ENCODE measurements at regions of chr1 and their contacts with region 1.

Region 1: DNA sequence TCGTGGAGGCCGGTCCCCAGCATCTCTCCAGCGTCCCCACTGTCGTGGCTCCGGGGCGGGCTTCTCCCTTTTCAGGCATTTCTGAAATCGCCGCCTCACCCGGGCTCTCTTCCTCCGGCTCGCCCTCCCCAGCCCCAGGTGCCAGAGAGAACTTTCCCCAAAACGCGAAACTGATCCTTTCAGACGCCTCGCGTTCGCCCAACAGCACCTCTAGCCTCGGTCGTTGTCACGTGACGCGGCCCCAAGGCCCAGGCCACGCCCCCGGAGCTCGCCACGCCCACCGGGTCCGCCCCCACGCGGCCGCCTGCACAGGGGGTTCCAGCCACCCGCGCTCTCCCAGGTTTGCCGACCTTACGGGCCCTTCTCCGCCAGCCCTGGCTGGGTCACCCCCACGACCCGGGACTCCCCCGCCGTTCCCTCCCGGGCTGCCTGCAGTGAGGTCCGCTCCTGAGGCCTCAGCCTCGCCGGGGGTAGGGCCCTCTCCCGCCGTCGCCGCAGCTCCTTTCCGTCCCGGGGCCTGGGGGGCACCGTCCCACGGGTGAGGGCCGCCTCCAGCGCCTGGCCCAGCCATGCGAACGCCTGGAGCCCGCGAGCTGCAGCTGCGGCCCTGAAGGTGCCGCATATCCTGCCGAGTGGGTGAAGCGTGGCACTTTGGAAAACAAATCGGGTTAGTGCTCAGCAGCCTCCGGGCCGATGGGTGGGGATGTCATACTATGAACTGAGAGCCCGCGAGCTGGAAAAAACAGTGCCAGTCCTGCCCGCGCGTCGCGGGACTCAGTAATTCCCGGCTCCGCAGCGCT is 21.0 kb downstream of the H3-3A start:
- DNase-seq: peak; percentile 98
- H3K4me3 ChIP-seq: peak overlapping the region; percentile 64 to 81
- H3K27ac ChIP-seq: peak overlapping the region; percentile 64 to 82
- H3K4me1 ChIP-seq: peaks cover 0 to 5% of the 10 kb centered on the region in 2 experiments; a peak in 2 of 4 replicates
- H3K27me3 ChIP-seq: no peaks in the 10 kb centered on the region
- CTCF ChIP-seq: no peak
- EP300 ChIP-seq: no peak
- RAD21 ChIP-seq: peak; percentile 18; the same call in 1 of the 2 replicates

Region 2: DNA sequence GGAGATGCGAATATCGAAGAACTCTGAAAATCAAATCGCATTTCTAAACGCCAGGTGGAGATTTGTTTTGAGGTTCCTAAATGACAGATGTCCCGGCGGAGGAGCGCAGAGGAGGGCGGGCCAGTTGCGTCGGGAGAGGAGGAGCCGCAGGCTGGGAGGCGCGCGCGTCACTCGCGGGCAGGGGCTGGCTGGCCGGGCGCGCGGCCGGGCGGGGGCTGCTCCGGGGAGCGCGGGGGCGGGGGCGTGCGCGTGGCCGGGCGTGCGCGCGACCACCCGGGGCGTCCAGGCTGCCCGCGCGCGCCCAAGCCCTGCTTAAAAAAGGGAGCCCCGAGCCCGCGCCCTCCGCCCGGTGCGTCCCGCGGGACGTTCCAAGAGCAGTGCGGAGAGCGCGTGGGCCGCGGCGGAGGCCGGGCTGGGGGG is 26.3 kb after region 1 on chr1:
- CTCF ChIA-PET with region 1: interaction called, 13 read pairs
- POLR2A ChIA-PET with region 1: interaction called, 16 read pairs
- DNase-seq: peak; percentile 99
- H3K4me3 ChIP-seq: peak overlapping the region; percentile 58 to 71
- H3K27ac ChIP-seq: peak overlapping the region; percentile 84 to 95
- H3K4me1 ChIP-seq: peaks cover 15 to 19% of the 10 kb centered on the region in 2 experiments; a peak in 3 of 4 replicates
- H3K27me3 ChIP-seq: no peaks in the 10 kb centered on the region
- CTCF ChIP-seq: no peak
- EP300 ChIP-seq: no peak
- RAD21 ChIP-seq: peak; percentile 24; the same call in 1 of the 2 replicates

Measured in SK-N-SH (cell line).